Cardiac septum (tissue), 1 donor: ENCODE measurements at regions of chr6 and their contacts with region 1.

Region 1: DNA sequence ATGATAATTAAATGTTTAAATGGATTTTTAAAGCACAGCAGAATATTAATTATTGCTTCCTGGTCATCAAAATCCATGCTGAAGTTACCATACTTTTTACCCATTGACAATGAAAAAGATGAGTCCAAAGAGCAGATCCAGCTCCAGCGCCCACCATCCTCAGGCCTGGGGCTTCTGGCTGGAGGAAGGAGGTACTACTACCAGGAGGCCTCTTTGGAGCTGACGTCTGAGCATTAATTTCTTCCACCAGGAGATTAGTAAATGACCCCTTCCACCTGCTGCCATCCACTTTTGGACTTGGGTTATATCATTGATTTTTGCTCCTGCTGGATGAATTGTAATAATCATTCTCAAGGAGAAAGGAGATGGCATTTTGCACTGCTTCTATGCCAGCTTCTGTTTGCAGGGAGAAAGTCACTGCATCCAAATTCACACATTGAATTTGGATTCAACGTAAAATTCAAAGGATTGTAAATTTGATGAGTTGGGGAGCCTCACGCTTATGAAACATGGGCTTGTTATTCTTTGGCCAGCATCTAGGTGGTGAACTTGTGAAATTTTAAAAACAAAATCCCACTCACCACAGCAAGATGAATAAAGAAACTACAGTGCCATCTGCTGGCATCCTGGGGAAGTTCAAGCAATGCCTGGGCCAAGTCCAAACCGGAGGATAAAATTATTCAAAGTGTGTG is 121.8 kb downstream of the SASH1 start:
- DNase-seq: no peak

Region 2: GRCh38 chr6:147506704-147507114 is 957.8 kb before region 1 on chr6:
- intact Hi-C with region 1: loop called (anchors 5 kb)
- DNase-seq: peak; percentile 82

Region 3: DNA sequence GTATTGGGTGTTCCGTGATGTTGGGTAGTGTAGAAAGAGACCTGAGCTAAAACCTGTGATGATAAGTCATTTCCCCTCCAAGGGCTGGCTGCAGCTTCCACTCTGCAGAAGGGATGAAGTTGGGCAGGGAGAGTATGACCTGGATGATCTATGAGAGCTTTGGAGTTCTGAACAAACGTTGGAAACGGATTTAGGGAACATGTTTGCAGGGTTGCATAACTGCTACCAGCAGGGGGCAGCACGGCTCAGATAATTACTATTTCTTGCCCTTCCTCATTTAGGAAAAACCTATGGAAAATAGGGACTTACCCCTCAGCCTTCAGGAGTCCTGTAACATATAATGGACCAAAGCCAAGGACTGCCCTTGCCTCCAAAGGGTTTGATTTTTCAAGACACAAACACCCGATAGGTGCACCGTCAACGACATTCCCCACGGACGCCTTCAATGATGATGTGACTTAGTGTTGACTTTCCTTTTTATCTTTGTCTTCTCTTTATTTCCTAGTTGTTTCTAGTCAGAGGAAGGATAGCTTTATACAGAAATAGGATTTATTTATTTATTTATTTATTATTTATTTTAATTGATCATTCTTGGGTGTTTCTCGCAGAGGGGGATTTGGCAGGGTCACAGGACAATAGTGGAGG is 286.8 kb before region 1 on chr6:
- intact Hi-C with region 1: loop called (anchors 2 kb)
- DNase-seq: no peak

Region 4: DNA sequence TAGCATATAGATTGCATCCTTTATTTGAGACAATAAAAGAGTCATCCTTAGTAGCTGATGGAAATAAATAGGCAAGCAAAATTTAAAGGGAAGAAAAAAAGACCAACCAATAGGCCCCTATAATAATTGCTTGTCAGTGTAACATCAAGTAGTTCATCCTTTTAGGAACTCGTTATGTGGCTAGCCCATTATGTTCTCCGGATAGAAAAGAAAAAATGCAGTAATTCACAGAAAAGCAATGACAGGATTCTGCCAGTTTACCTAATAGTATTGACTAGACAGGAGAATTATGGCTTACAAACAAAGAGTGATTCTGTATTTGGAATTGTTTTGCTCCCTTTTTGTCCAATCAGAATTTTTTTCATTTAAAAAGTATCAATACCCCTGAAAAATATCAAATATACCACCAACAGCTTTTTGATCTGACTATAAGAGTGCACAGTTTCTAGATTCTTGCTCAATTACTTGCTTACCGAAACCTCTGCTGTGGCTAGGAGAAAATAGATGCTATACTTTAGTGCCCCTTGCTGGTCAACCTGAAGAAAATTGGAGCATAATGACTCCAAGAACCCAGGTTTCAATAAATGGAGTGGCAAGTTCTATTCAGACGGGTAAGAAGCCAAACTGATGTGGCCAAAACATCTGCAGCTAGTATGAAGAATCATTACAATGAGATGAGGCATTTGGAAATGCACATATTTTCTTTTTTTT is 213.3 kb before region 1 on chr6:
- intact Hi-C with region 1: loop called (anchors 5 kb)
- DNase-seq: no peak

Region 5: GRCh38 chr6:148342357-148343046 is 122.0 kb before region 1 on chr6 and contains the start of gene SASH1:
- intact Hi-C with region 1: loop called (anchors 5 kb)
- DNase-seq: peak; percentile 78
- total RNA-seq, gene SASH1: 20.5 TPM

Region 6: GRCh38 chr6:148501178-148501590 is 36.7 kb after region 1 on chr6:
- intact Hi-C with region 1: no loop called
- DNase-seq: no peak